ENCODE measurements at regions of chr14 and their contacts with region 1.

Region 1: DNA sequence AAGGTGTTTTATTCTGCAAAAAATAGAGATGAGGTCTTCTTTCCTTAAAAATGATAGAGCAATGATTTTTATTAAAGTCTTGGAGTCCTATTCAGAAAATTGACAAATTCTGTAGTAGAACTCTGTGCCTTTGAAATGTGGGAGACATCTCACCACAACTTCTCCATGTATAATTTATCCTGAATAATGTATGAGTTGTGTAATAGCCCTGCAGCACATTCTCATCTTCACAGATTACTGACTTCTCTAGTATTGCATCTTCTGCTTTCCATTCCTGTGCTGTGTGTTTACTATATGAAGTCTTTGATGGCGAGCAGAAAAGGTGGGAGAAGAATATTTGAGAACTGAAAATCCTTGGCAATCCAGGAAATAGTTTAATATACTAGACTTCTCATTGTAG is 255.6 kb downstream of the TTC6 start:
- DNase-seq: no peak
- H3K4me3 ChIP-seq: no peak overlapping the region
- H3K27ac ChIP-seq: no peak overlapping the region
- H3K4me1 ChIP-seq: no peaks in the 10 kb centered on the region
- H3K27me3 ChIP-seq: no peaks in the 10 kb centered on the region
- CTCF ChIP-seq: no peak
- POLR2A ChIP-seq: no peak

Region 2: DNA sequence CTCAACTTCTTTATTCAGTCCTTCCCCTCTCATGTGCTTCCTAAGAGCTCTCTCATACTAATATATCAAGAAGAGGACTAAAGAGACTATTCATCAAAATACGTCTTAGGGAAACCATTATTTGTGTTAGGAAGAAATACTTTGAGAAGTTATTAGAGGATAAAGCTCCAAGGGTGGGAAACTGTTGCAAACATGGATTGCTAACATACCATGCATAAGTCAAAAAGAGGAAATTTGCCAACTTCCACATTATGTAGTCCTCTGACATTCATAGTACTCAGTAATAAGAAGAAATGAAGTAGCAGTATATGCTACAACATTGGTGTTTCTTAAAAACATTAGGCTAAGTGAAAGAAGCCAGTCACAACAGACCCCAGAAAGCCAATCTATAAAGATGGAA is 533.7 kb after region 1 on chr14:
- intact Hi-C with region 1: loop called (anchors 5 kb)
- DNase-seq: no peak
- H3K4me3 ChIP-seq: no peak overlapping the region
- H3K27ac ChIP-seq: no peak overlapping the region
- H3K4me1 ChIP-seq: no peaks in the 10 kb centered on the region
- H3K27me3 ChIP-seq: no peaks in the 10 kb centered on the region
- CTCF ChIP-seq: no peak
- POLR2A ChIP-seq: no peak

Measured in breast epithelium (tissue), 4 donors.